Caco-2 (cell line): ENCODE measurements at regions of chr16 and their contacts with region 1.

Region 1: GRCh38 chr16:75265845-75266701 is 14.6 kb upstream of the BCAR1 start:
- DNase-seq: peak; percentile 94 to 96
- H3K4me3 ChIP-seq: peak overlapping the region; percentile 89
- H3K4me3 Mint-ChIP-seq: peak overlapping the region; percentile 82
- H3K27ac Mint-ChIP-seq: peak overlapping the region; percentile 95
- H3K4me1 ChIP-seq: peaks cover 46% of the 10 kb centered on the region
- H3K4me1 Mint-ChIP-seq: peaks cover 21% of the 10 kb centered on the region
- H3K27me3 ChIP-seq: no peaks in the 10 kb centered on the region
- H3K27me3 Mint-ChIP-seq: no peaks in the 10 kb centered on the region
- CTCF ChIP-seq: peak in 1 of 2 experiments; percentile 19

Region 2: GRCh38 chr16:75218256-75219070 is 47.6 kb before region 1 on chr16 and contains the start of gene CTRB1:
- CTCF ChIA-PET with region 1: no interaction called
- POLR2A ChIA-PET with region 1: no interaction called
- intact Hi-C with region 1: no loop called
- DNase-seq: no peak
- H3K4me3 ChIP-seq: no peak within 1 kb of the TSS
- H3K4me3 Mint-ChIP-seq: no peak within 1 kb of the TSS
- H3K27ac Mint-ChIP-seq: no peak within 1 kb of the TSS
- H3K4me1 ChIP-seq: 0 out of 2 replicates have a peak, but pooled peaks cover 4% of the 10 kb centered on the region
- H3K4me1 Mint-ChIP-seq: no peaks in the 10 kb centered on the region
- H3K27me3 ChIP-seq: no peaks in the 10 kb centered on the region
- H3K27me3 Mint-ChIP-seq: no peaks in the 10 kb centered on the region
- CTCF ChIP-seq: no peak
- total RNA-seq, gene CTRB1: not detected in 2 replicates

Region 3: GRCh38 chr16:75251280-75252048 is 14.6 kb before region 1 on chr16 and contains the start of gene BCAR1:
- CTCF ChIA-PET with region 1: no interaction called
- POLR2A ChIA-PET with region 1: interaction called, 7 read pairs
- intact Hi-C with region 1: loop called (anchors 1 kb)
- DNase-seq: peak; percentile 94 to 97
- H3K4me3 ChIP-seq: peak within 1 kb of the TSS; percentile 96
- H3K4me3 Mint-ChIP-seq: peak within 1 kb of the TSS; percentile 96
- H3K27ac Mint-ChIP-seq: peak within 1 kb of the TSS; percentile 89
- H3K4me1 ChIP-seq: peaks cover 67% of the 10 kb centered on the region
- H3K4me1 Mint-ChIP-seq: peaks cover 47% of the 10 kb centered on the region
- H3K27me3 ChIP-seq: no peaks in the 10 kb centered on the region
- H3K27me3 Mint-ChIP-seq: no peaks in the 10 kb centered on the region
- CTCF ChIP-seq: no peak
- total RNA-seq, gene BCAR1: 94.0 and 95.5 TPM in 2 replicates

Region 4: GRCh38 chr16:75288596-75289120 is 22.6 kb after region 1 on chr16:
- CTCF ChIA-PET with region 1: no interaction called
- POLR2A ChIA-PET with region 1: no interaction called
- intact Hi-C with region 1: no loop called
- DNase-seq: no peak
- H3K4me3 ChIP-seq: no peak overlapping the region
- H3K4me3 Mint-ChIP-seq: no peak overlapping the region
- H3K27ac Mint-ChIP-seq: no peak overlapping the region
- H3K4me1 ChIP-seq: no peaks in the 10 kb centered on the region
- H3K4me1 Mint-ChIP-seq: no peaks in the 10 kb centered on the region
- H3K27me3 ChIP-seq: no peaks in the 10 kb centered on the region; the same call in 1 of the 2 replicates
- H3K27me3 Mint-ChIP-seq: no peaks in the 10 kb centered on the region
- CTCF ChIP-seq: no peak

Region 5: DNA sequence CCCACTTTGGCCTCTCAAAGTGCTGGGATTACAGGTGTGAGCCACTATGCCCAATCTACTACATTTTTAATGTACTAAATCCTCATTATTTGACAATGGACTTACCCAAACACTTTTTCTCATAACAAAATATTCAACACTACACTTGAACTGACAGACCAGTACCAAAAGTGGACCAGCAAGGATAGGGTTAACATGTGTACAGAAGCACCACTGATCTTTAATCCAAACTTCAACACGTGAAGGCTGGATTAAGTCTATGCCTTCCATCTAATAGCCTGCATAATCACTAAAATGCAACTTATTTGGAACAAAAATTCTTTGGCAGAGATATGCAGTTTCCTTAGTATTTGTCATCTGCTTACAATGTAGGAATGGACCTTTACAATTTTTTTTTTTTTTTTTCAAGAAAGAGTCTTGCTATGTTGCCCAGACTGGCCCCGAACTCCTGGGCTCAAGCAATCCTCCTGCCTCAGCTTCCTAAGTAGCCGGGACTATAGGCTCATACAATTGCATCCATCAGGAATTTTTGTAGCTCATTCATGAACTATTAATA is 45.4 kb after region 1 on chr16:
- CTCF ChIA-PET with region 1: no interaction called
- POLR2A ChIA-PET with region 1: no interaction called
- intact Hi-C with region 1: loop called (anchors 2 kb)
- DNase-seq: no peak
- H3K4me3 ChIP-seq: no peak overlapping the region
- H3K4me3 Mint-ChIP-seq: no peak overlapping the region
- H3K27ac Mint-ChIP-seq: peak overlapping the region; percentile 24
- H3K4me1 ChIP-seq: peaks cover 46% of the 10 kb centered on the region
- H3K4me1 Mint-ChIP-seq: peaks cover 32% of the 10 kb centered on the region
- H3K27me3 ChIP-seq: no peaks in the 10 kb centered on the region
- H3K27me3 Mint-ChIP-seq: no peaks in the 10 kb centered on the region
- CTCF ChIP-seq: no peak